Left lung (tissue), 14 donors: ENCODE measurements at regions of chr17 and their contacts with region 1.

Region 1: GRCh38 chr17:1769822-1770477 is 8.1 kb downstream of the SERPINF1 start:
- DNase-seq: peak in 1 of 4 donors; percentile 64
- ATAC-seq: peak; percentile 82
- H3K4me3 ChIP-seq: no peak overlapping the region
- H3K27ac ChIP-seq: peak overlapping the region; percentile 0 to 33
- H3K4me1 ChIP-seq: peaks cover 13 to 53% of the 10 kb centered on the region in 2 donors
- H3K27me3 ChIP-seq: no peaks in the 10 kb centered on the region
- CTCF ChIP-seq: no peak

Region 2: DNA sequence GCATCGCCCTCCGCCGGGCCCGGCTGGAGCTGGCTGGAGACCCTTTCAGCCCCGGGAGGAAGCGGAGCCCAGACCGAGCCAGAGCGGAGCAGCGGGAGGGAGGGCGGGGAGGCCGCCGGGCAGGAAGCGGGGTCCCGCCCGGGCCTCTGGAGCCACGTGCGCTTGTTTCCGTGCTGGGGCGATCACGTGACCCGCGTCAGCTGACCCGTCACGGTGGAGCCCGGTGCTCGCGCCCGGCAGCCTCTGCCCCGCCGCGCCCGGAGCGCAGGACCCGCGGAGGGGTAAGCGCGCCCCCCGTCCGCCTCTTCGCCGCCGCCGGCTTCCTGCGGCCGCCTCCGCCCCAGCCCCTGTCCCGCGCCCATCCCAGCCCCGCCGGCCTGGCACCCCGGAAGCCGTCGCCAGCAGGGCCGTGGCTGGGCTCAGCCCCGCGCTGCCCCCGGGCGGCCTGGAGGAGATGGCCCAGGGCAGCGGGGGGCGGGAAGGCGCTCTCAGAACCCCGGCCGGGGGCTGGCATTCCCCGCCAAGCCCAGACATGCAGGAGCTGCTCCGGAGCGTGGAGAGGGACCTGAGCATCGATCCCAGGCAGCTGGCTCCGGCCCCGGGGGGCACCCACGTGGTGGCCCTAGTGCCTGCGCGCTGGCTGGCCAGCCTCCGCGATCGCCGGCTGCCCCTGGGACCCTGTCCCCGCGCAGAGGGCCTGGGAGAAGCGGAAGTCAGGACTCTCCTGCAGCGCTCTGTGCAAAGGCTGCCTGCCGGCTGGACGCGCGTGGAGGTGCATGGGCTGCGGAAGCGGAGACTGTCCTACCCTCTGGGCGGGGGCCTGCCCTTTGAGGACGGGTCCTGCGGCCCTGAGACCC is 45.2 kb before region 1 on chr17 and contains the start of gene WDR81:
- intact Hi-C with region 1: loop called (anchors 5 to 10 kb)
- DNase-seq: peak; percentile 82 to 99 (median 93)
- ATAC-seq: peak; percentile 85
- H3K4me3 ChIP-seq: peak within 1 kb of the TSS; percentile 67 to 94
- H3K27ac ChIP-seq: peak within 1 kb of the TSS; percentile 85 to 88
- H3K4me1 ChIP-seq: peaks cover 16 to 90% of the 10 kb centered on the region in 2 donors
- H3K27me3 ChIP-seq: no peaks in the 10 kb centered on the region
- CTCF ChIP-seq: no peak
- polyA plus RNA-seq, gene WDR81: 9.3 to 13.5 (median 11.0) TPM

Region 3: GRCh38 chr17:1890758-1891450 is 121.0 kb after region 1 on chr17:
- intact Hi-C with region 1: no loop called
- DNase-seq: no peak
- ATAC-seq: no peak
- H3K4me3 ChIP-seq: no peak overlapping the region
- H3K27ac ChIP-seq: no peak overlapping the region
- H3K4me1 ChIP-seq: no peaks in the 10 kb centered on the region
- H3K27me3 ChIP-seq: no peaks in the 10 kb centered on the region
- CTCF ChIP-seq: no peak